WTC11 (cell line): ENCODE measurements at regions of chr14 and their contacts with region 1.

Region 1: GRCh38 chr14:68762953-68763764 is 29.7 kb downstream of the ZFP36L1 start:
- DNase-seq: peak; percentile 66
- ATAC-seq: peak; percentile 91
- H3K4me3 Mint-ChIP-seq: no peak overlapping the region
- H3K27ac Mint-ChIP-seq: no peak overlapping the region
- H3K4me1 Mint-ChIP-seq: peaks cover 25% of the 10 kb centered on the region
- H3K27me3 Mint-ChIP-seq: no peaks in the 10 kb centered on the region
- CTCF ChIP-seq: no peak

Region 2: DNA sequence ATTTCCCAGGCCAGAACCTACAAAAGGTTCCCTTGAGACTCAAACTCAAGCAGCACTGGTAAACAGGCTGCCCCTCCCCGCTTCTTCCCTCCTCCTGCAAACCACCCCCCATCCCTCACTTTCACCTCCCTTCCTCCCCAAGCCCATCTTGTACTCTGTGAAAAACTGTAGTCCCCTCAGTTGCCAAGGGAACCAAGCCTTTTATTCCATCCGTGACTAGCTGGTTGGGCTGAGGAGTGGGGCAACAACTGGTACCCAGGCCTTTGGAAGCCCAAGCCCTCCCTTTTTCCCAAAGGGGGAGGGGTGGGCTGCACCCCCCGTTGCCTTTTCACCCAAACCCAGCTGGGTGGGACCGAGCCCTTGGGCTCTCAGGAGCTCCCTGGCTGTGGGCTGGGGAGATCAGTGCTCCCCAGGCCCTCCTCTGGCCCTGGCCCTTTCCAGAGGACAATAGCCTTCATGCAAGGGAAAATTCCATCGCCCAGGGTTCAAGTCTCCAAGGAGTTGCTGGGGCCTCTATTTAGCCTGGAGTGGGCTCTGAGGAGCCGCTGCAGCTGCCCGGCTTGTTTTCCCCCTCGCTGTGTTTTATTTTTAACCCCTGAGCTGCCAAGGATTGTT is 32.2 kb before region 1 on chr14:
- CTCF ChIA-PET with region 1: interaction called, 4 read pairs
- POLR2A ChIA-PET with region 1: interaction called, 12 read pairs
- DNase-seq: peak; percentile 27
- ATAC-seq: peak; percentile 83
- H3K4me3 Mint-ChIP-seq: no peak overlapping the region
- H3K27ac Mint-ChIP-seq: no peak overlapping the region
- H3K4me1 Mint-ChIP-seq: peaks cover 29% of the 10 kb centered on the region
- H3K27me3 Mint-ChIP-seq: no peaks in the 10 kb centered on the region
- CTCF ChIP-seq: no peak

Region 3: DNA sequence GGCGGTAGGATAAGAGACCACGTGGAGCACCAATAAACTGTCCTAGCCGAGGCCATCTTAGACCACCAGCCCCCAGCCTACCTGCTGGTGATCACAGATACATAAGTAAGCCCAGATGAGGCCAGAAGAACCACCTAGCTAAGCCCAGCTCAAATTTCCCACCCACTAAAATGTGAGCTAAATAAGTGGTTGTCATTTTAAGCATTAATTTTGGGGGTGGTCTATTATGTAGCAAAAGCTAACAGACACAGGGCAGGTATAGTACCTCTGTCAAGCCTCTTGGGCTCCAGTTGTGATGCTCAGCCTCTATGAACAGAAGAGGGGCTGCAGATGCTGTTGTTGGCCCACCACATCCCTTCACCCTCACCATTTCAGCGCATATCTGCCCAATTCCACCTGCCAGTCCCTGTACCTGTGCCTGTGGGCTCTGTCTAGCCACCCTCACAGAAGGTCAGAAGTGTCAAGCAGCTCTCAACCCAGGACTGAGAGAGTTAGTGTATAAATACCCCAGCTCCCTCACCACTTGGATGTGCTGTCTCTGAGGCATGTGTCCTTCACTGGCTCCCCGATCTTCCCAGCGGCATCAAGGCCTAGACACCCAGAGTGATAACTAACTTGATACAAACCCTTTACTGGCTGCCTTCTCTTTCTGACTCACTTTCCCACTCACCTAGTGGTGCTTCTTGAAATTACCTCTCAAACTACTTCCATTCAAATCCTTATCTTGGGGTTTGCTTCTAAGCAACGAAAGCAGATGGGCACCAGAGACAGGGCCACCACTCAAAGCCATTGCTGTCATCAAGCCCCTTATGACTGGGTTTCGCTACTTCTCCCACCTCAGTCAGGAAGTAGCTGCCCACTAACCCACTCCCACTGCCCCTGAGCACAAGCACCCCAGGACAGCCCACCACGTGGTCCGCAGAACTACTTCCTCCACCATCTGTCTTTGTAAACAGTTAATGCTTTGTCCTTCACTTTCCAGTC is 12.3 kb after region 1 on chr14:
- CTCF ChIA-PET with region 1: interaction called, 12 read pairs
- POLR2A ChIA-PET with region 1: interaction called, 4 read pairs
- DNase-seq: no peak
- ATAC-seq: peak; percentile 71
- H3K4me3 Mint-ChIP-seq: no peak overlapping the region
- H3K27ac Mint-ChIP-seq: no peak overlapping the region
- H3K4me1 Mint-ChIP-seq: peaks cover 11% of the 10 kb centered on the region
- H3K27me3 Mint-ChIP-seq: no peaks in the 10 kb centered on the region; the same call in 1 of the 2 replicates
- CTCF ChIP-seq: no peak